Naive thymus-derived CD4-positive, alpha-beta T cell (primary cell): ENCODE measurements at regions of chr19 and their contacts with region 1.

Region 1: DNA sequence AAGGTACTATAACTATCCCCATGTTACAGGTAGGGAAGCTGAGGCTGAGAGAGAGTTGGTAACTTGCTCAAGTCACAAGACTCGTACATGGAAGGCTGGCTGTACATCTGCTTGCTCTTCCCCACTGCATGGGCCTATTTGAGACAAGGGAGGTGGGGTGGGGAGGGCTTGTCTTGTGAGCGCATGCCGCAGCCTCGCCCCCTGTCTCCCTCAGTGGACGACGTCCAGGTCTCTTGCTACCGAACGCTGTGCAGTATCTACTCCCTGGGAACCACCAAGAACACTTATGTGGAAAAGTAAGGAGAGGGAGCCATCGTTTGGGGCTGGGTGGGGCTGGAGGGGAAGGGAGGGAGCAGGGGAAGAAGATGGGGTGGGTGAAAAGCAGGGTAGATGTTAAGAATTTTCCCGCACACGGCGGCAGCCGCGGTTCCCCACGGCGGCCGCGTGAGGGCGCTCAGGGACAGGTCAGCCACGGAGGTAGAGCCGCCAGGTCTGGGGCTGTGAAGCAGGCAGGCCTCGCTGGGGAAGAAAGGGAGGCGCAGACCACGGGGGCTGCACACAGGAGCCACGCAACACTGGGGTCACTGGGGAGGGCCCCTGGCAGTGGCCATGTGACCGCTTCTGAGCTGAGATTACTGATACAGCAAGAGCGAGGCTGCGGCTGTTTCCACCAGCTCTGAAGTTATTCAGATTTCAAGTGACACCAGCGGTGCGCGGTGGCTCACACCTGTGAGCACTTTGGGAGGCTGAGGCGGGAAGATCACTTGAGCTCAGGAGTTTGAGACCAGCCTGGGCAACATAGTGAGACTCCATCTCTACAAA is 81.5 kb downstream of the RYR1 start:
- DNase-seq: peak; percentile 47 to 84 (median 74)
- ATAC-seq: peak; percentile 95
- H3K4me3 ChIP-seq: no peak overlapping the region
- H3K4me3 Mint-ChIP-seq: peak overlapping the region in 2 of 10 donors; percentile 16 to 45
- H3K27ac ChIP-seq: no peak overlapping the region
- H3K27ac Mint-ChIP-seq: peak overlapping the region in 3 of 9 donors; percentile 14 to 64 (median 60)
- H3K4me1 ChIP-seq: peaks cover 0 to 10% of the 10 kb centered on the region in 2 donors
- H3K4me1 Mint-ChIP-seq: peaks cover 6 to 30% (median 9%) of the 10 kb centered on the region in 7 donors
- H3K27me3 ChIP-seq: no peaks in the 10 kb centered on the region
- H3K27me3 Mint-ChIP-seq: peaks cover 0 to 4% (median 4%) of the 10 kb centered on the region in 5 donors

Region 2: DNA sequence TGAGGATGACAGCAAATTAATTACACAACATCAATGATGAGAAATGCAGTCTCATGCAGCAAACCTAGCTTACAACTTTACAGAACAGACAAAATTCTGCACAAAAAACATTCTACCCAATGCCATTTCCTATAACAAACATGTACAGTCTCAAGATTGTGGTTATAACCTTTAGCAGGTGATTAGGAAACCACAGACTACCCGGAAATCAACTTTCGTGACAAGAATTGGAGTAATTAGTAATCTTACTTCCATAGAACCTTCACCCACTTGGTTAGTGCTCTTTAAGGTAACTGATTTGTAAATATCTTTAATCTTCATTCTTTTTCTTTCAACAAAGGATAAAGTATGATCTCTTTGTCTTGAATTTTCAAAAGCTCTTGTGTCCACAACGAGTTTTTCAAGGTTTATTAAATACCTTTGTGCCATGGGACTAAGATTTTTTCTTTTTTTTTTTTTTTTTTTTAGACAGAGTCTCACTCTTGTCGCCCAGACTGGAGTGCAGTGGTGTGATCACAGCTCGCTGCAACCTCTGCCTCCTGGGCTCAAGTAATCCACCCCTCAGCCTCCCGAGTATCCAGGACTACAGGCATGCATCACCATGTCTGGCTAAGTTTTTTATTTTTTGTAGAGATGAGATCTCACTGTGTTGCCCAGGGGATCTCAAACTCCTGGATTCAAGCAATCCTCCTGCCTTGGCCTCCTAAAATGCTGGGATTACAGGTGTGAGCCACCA is 23.9 kb after region 1 on chr19:
- CTCF ChIA-PET with region 1: interaction called, 9 read pairs
- POLR2A ChIA-PET with region 1: interaction called, 3 read pairs
- intact Hi-C with region 1: loop called (anchors 1 kb)
- DNase-seq: peak in 7 of 9 donors; percentile 48 to 72 (median 61)
- ATAC-seq: peak; percentile 71
- H3K4me3 ChIP-seq: peak overlapping the region; percentile 9
- H3K4me3 Mint-ChIP-seq: peak overlapping the region in 9 of 10 donors; percentile 46 to 77 (median 72)
- H3K27ac ChIP-seq: no peak overlapping the region
- H3K27ac Mint-ChIP-seq: peak overlapping the region; percentile 22 to 93 (median 81)
- H3K4me1 ChIP-seq: peaks cover 31 to 34% of the 10 kb centered on the region in 2 donors
- H3K4me1 Mint-ChIP-seq: peaks cover 27 to 51% (median 44%) of the 10 kb centered on the region in 7 donors
- H3K27me3 ChIP-seq: no peaks in the 10 kb centered on the region
- H3K27me3 Mint-ChIP-seq: peaks cover 0 to 2% (median 0%) of the 10 kb centered on the region in 5 donors

Region 3: GRCh38 chr19:38544034-38544958 is 29.3 kb after region 1 on chr19:
- CTCF ChIA-PET with region 1: interaction called, 9 read pairs
- POLR2A ChIA-PET with region 1: interaction called, 3 read pairs
- intact Hi-C with region 1: loop called (anchors 1 kb)
- DNase-seq: peak in 8 of 9 donors; percentile 36 to 68 (median 53)
- ATAC-seq: peak; percentile 88
- H3K4me3 ChIP-seq: no peak overlapping the region
- H3K4me3 Mint-ChIP-seq: peak overlapping the region in 7 of 10 donors; percentile 0 to 65 (median 45)
- H3K27ac ChIP-seq: no peak overlapping the region
- H3K27ac Mint-ChIP-seq: peak overlapping the region in 7 of 9 donors; percentile 1 to 85 (median 13)
- H3K4me1 ChIP-seq: peaks cover 4 to 14% of the 10 kb centered on the region in 2 donors
- H3K4me1 Mint-ChIP-seq: peaks cover 9 to 34% (median 19%) of the 10 kb centered on the region in 7 donors
- H3K27me3 ChIP-seq: no peaks in the 10 kb centered on the region
- H3K27me3 Mint-ChIP-seq: no peaks in the 10 kb centered on the region

Region 4: DNA sequence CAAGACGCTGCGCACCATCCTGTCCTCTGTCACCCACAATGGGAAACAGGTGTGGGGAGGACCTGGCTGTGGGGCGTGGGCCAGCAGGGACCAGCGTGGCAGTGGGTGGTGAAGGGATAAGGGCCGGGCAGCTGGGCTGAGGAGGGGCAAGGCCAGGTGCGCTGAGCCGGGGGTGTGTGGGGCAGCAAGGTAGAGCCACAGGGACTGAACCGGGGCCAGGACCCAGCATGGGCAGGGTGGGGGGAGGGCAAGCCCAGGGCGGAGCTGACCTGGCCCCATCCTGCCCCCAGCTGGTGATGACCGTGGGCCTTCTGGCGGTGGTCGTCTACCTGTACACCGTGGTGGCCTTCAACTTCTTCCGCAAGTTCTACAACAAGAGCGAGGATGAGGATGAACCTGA is 65.1 kb after region 1 on chr19:
- CTCF ChIA-PET with region 1: no interaction called
- POLR2A ChIA-PET with region 1: no interaction called
- intact Hi-C with region 1: no loop called
- DNase-seq: no peak
- ATAC-seq: no peak
- H3K4me3 ChIP-seq: no peak overlapping the region
- H3K4me3 Mint-ChIP-seq: no peak overlapping the region
- H3K27ac ChIP-seq: no peak overlapping the region
- H3K27ac Mint-ChIP-seq: no peak overlapping the region
- H3K4me1 ChIP-seq: peaks cover 0 to 7% of the 10 kb centered on the region in 2 donors
- H3K4me1 Mint-ChIP-seq: peaks cover 0 to 19% (median 0%) of the 10 kb centered on the region in 7 donors
- H3K27me3 ChIP-seq: no peaks in the 10 kb centered on the region
- H3K27me3 Mint-ChIP-seq: no peaks in the 10 kb centered on the region

Region 5: GRCh38 chr19:38949580-38950367 is 434.8 kb after region 1 on chr19:
- CTCF ChIA-PET with region 1: no interaction called
- POLR2A ChIA-PET with region 1: no interaction called
- intact Hi-C with region 1: loop called in 1 of 2 experiments (anchors 1 kb)
- DNase-seq: peak; percentile 49 to 88 (median 70)
- ATAC-seq: peak; percentile 98
- H3K4me3 ChIP-seq: peak overlapping the region; percentile 39
- H3K4me3 Mint-ChIP-seq: peak overlapping the region; percentile 52 to 82 (median 72)
- H3K27ac ChIP-seq: no peak overlapping the region
- H3K27ac Mint-ChIP-seq: peak overlapping the region in 3 of 9 donors; percentile 20 to 64 (median 61)
- H3K4me1 ChIP-seq: peaks cover 0 to 4% of the 10 kb centered on the region in 2 donors
- H3K4me1 Mint-ChIP-seq: peaks cover 10 to 18% (median 16%) of the 10 kb centered on the region in 7 donors
- H3K27me3 ChIP-seq: no peaks in the 10 kb centered on the region
- H3K27me3 Mint-ChIP-seq: peaks cover 14 to 29% (median 15%) of the 10 kb centered on the region in 5 donors